ENCODE measurements at regions of chr10 and their contacts with region 1.

Region 1: DNA sequence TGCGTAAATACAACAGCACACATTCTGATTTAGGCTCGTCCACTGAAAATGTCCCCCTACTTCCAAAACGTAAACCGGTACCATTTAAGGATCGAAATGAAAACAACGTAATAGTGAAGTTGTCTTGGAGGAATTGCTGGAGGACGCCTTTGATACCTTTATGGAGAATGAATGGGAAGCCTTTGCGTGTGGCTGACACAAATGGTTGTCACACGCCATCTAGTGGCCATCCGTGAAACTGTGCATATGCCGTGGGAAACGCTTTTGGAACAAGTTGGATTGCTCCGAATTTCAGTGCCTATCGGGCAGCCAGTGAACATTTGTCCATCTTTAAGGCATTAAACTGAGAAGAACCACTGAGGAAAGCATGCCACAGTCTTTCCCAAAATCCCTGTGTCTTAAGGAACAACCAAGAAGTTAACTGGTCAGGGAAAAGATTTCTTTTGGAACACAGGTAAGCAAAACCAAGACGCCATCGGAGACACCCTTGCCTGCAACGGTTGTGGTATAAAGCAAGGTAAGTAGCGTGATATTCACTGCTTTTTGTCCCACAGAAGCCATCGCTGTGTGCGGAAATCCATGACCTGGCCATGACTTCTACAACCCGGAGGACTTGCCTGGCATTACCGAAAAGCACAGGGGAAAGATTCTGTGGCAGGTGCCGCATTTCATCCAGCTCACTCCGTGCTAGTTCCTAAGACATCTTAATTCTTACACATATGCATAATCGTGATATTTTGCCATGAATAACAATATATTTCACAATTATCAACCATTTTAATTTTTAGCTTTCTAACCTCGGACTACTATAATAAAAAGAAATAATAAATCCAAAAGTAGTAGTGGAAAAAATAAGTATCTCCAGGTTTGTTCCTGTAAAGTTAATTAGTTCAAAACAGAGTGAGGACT is 100.6 kb downstream of the FAM204A start:
- DNase-seq: peak; percentile 61 to 78 (median 66)
- ATAC-seq: peak; percentile 47 to 73 (median 59)
- H3K4me3 ChIP-seq: no peak overlapping the region
- H3K27ac ChIP-seq: no peak overlapping the region
- H3K4me1 ChIP-seq: peaks cover 0 to 4% (median 0%) of the 10 kb centered on the region in 12 donors
- H3K27me3 ChIP-seq: peaks cover 11 to 95% (median 50%) of the 10 kb centered on the region in 9 donors
- CTCF ChIP-seq: peak; percentile 84 to 96 (median 92)
- POLR2A ChIP-seq: no peak

Region 2: GRCh38 chr10:117216611-117217195 is 1024.8 kb before region 1 on chr10:
- intact Hi-C with region 1: loop called in 4 of 10 experiments (anchors 5 to 10 kb)
- DNase-seq: peak; percentile 55 to 86 (median 65)
- ATAC-seq: peak; percentile 26 to 92 (median 86)
- H3K4me3 ChIP-seq: peak overlapping the region in 11 of 12 donors; percentile 9 to 57 (median 42)
- H3K27ac ChIP-seq: no peak overlapping the region
- H3K4me1 ChIP-seq: peaks cover 0 to 13% (median 8%) of the 10 kb centered on the region in 12 donors
- H3K27me3 ChIP-seq: peaks cover 19 to 58% (median 27%) of the 10 kb centered on the region in 9 donors
- CTCF ChIP-seq: peak; percentile 99 to 100 (median 100)
- POLR2A ChIP-seq: no peak

Region 3: GRCh38 chr10:117496616-117497028 is 744.9 kb before region 1 on chr10:
- intact Hi-C with region 1: loop called (anchors 1 to 5 kb)
- DNase-seq: peak; percentile 62 to 86 (median 67)
- ATAC-seq: peak; percentile 73 to 94 (median 86)
- H3K4me3 ChIP-seq: no peak overlapping the region
- H3K27ac ChIP-seq: no peak overlapping the region
- H3K4me1 ChIP-seq: peaks cover 0 to 3% (median 0%) of the 10 kb centered on the region in 12 donors
- H3K27me3 ChIP-seq: peaks cover 0 to 39% (median 6%) of the 10 kb centered on the region in 9 donors
- CTCF ChIP-seq: peak; percentile 92 to 97 (median 95)
- POLR2A ChIP-seq: no peak

Region 4: DNA sequence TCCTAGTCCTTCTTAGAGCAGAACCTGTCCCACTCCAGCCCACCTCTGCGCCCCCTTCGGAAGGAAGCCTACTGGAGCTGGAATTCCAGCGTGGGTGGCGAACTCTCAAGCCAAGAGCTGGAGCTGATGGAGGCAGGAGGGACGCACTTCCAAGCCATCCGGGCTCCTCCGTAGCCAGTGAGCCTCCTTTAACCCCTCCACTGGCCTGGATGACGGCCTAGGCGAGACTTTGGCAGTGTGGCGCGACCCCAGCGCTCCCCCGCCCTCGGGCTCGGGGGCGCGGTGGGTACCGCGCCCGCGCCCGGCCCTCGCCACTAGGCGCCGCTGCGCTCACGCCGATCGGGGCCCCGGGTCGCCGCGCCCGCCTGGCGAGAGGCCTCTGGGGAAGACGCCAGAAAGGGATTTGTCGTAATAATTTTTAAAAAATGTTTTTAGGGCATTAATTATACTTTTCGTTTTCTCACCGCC is 704.0 kb before region 1 on chr10:
- intact Hi-C with region 1: loop called (anchors 1 to 10 kb)
- DNase-seq: no peak
- ATAC-seq: peak in 3 of 4 donors; percentile 56 to 82 (median 61)
- H3K4me3 ChIP-seq: peak overlapping the region in 5 of 12 donors; percentile 16 to 43 (median 33)
- H3K27ac ChIP-seq: no peak overlapping the region
- H3K4me1 ChIP-seq: peaks cover 0 to 46% (median 22%) of the 10 kb centered on the region in 12 donors
- H3K27me3 ChIP-seq: peaks cover 64 to 100% (median 98%) of the 10 kb centered on the region in 9 donors
- CTCF ChIP-seq: peak in 11 of 12 donors; percentile 38 to 79 (median 70)
- POLR2A ChIP-seq: no peak

Region 5: DNA sequence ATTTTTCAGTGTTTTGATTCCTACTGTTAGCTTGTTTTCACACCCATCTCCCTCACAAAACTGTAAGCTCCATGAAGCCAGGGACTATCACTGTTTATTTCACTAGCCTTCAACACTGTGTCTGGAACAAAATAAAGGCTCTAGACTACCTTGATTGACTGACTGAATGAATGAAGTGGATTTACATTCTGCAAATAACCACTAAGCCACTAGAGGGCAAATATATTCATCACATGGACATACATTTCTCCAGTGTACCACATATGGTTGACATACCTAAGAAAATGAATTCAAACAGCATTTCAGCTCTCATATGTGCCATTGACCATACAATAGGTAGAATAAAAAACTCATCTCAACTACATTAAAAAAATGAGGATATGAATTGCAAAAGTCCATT is 380.7 kb before region 1 on chr10:
- intact Hi-C with region 1: loop called in 1 of 10 experiments (anchors 5 kb)
- DNase-seq: no peak
- ATAC-seq: no peak
- H3K4me3 ChIP-seq: no peak overlapping the region
- H3K27ac ChIP-seq: no peak overlapping the region
- H3K4me1 ChIP-seq: no peaks in the 10 kb centered on the region
- H3K27me3 ChIP-seq: peaks cover 0 to 35% (median 0%) of the 10 kb centered on the region in 9 donors
- CTCF ChIP-seq: peak in 4 of 12 donors; percentile 8 to 24 (median 16)
- POLR2A ChIP-seq: no peak

Region 6: DNA sequence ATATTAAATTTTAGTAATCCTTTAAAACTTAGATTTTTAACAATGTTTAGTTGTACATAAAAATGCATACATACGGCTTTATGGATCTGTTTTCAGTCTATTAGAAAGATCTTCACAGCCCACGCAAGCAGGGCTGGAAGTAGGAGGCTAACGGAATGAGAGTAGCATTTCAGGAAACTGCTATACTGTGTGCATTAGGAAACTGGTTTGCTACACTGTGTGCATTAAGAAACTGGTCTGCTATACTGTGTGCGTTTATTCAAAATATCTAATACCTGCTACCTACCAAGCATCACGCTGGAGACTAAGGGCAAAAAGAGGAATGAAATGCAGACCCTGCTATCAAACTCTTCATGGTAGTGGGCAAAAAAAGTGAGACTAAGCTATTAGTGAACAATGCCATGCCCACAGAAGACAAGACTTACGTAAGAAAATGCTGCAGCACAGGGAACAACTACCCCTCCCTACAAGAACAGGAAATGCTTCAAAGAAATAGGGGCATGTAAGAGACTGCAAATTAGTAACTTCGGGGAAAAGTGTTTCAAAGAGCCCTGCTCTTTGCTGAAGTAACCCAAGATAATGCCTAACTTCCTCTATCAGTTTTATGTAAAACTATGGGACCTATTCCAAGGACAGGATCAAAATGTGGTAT is 206.0 kb before region 1 on chr10:
- intact Hi-C with region 1: loop called in 1 of 10 experiments (anchors 10 kb)
- DNase-seq: no peak
- ATAC-seq: peak in 2 of 4 donors; percentile 56 to 58
- H3K4me3 ChIP-seq: no peak overlapping the region
- H3K27ac ChIP-seq: peak overlapping the region in 1 of 12 donors; percentile 73
- H3K4me1 ChIP-seq: peaks cover 0 to 43% (median 16%) of the 10 kb centered on the region in 12 donors
- H3K27me3 ChIP-seq: no peaks in the 10 kb centered on the region
- CTCF ChIP-seq: no peak
- POLR2A ChIP-seq: no peak

Region 7: DNA sequence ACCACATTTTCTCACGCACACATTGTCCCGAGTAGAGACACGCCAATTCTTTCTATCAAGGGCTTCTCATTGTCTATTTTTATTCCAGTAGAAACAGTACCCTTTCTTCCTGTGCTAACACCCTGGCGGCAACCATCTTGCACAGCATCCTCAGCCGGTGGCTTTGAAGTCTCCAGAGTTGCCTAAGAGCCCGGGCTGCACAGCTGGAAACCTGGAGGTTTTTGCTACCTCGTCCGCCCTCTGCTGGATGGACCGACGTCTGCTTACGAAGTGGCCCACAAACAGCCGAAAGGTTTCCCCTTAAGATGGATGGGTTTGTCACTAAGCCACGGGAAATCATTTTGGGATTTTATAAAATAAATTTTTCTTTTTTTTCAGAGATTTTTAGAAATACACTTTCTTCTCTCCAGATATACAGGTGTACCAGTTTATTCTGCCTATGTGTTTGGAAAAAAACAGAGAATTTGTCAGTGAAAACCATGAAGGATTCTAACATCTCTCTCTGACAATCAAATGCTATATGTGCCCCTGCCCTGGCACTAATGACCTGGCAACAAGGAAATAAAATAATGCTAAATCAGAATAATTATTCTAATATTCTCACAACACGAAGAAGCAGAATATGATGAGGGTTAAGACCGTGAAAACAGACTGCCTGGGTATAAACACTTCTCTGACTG is 182.5 kb after region 1 on chr10:
- intact Hi-C with region 1: loop called in 1 of 10 experiments (anchors 10 kb)
- DNase-seq: peak; percentile 49 to 83 (median 77)
- ATAC-seq: peak in 3 of 4 donors; percentile 84 to 90 (median 87)
- H3K4me3 ChIP-seq: no peak overlapping the region
- H3K27ac ChIP-seq: no peak overlapping the region
- H3K4me1 ChIP-seq: no peaks in the 10 kb centered on the region
- H3K27me3 ChIP-seq: peaks cover 0 to 14% (median 0%) of the 10 kb centered on the region in 9 donors
- CTCF ChIP-seq: peak; percentile 51 to 82 (median 62)
- POLR2A ChIP-seq: no peak